ENCODE measurements at regions of chr5 and their contacts with region 1.

Region 1: DNA sequence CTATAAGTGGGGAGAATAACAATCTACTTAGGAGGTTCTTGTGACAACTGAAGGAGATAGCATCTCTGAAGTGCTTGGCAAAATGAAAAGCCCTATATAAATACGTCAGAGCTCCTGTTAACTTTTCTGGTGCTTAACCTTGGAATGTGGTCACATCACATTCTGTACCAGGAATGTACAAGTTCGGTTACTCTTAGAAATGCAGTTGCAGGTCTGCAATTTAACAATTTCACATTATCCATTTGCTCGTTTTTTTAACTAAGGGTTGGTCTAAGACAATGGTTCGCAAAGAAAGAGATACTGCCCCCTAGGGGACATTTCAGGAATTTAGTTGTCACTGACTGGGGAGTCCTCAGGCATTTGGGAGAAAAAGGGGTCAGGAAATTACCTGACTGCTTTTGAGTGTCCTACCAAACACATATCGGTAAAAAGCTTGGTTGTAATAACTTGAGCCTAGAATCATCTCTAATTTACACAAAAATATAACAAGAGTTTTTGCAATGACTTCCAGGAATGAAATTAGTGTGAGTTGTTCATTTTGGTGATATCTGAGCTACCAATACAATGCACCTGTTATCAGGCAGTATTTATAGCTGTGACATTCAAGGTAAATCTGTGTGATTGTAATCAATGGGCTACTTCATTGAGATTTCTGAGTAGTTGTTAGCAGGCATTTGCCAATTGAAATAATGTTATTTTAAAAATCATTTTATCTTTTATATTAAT is 5.4 kb upstream of the HBEGF start:
- DNase-seq: peak in 2 of 5 donors; percentile 61 to 62
- ATAC-seq: peak; percentile 32 to 55 (median 36)
- H3K4me3 ChIP-seq: no peak overlapping the region
- H3K27ac ChIP-seq: no peak overlapping the region
- H3K4me1 ChIP-seq: peaks cover 0 to 23% (median 15%) of the 10 kb centered on the region in 12 donors
- H3K27me3 ChIP-seq: no peaks in the 10 kb centered on the region
- CTCF ChIP-seq: peak; percentile 75 to 97 (median 89)
- POLR2A ChIP-seq: no peak

Region 2: DNA sequence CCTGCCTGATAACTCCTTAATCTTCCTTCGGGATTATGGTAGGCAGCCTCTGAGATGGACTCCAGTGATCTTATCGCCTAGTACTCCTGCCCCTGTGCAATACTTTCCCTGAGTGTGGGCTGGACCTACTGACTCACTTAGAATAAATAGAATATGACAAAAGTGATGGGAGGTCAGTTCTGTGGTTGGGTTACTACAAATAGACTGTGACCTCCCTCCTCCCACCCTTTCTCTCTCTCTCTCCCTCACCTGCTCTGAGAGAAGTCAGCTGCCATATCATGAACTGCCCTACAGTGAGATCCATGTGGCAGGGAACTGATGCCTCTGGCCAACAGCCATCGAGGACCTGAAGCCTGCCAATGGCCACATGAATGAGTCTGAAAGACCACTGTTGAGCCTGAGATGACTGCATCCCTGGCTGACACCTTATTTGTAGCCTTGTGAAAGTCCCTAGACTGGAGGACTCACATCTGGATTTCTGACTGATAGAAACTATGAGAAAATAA is 340.4 kb before region 1 on chr5:
- intact Hi-C with region 1: no loop called
- DNase-seq: peak in 4 of 5 donors; percentile 56 to 71 (median 67)
- ATAC-seq: peak; percentile 96 to 98 (median 96)
- H3K4me3 ChIP-seq: no peak overlapping the region
- H3K27ac ChIP-seq: peak overlapping the region; percentile 50 to 85 (median 75)
- H3K4me1 ChIP-seq: peaks cover 0 to 30% (median 12%) of the 10 kb centered on the region in 12 donors
- H3K27me3 ChIP-seq: peaks cover 0 to 6% (median 0%) of the 10 kb centered on the region in 9 donors
- CTCF ChIP-seq: no peak
- POLR2A ChIP-seq: no peak

Region 3: DNA sequence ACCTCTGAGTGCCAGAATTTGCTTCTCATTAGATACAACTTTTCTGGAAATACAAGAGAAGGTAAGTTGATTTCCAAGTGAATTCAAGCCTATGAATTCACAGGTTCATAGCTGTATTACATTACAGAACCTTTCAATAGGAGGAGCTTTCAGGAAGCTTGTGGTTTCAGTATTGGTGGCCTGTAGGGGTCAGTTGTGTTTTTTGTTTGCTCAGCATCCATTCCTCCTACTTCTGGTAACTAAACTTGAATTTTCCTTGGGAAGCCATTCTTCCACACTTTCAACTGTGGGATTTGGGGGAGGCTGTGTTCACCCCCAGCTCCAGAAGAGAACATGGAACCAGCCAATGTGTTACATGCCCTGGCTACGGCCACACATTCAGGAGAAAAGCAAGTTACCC is 182.4 kb before region 1 on chr5:
- intact Hi-C with region 1: loop called in 7 of 10 experiments (anchors 2 to 5 kb)
- DNase-seq: no peak
- ATAC-seq: no peak
- H3K4me3 ChIP-seq: no peak overlapping the region
- H3K27ac ChIP-seq: no peak overlapping the region
- H3K4me1 ChIP-seq: peaks cover 0 to 18% (median 8%) of the 10 kb centered on the region in 12 donors
- H3K27me3 ChIP-seq: no peaks in the 10 kb centered on the region
- CTCF ChIP-seq: peak in 7 of 12 donors; percentile 11 to 36 (median 22)
- POLR2A ChIP-seq: no peak

Region 4: GRCh38 chr5:140174465-140175366 is 177.1 kb before region 1 on chr5 and contains the start of gene CYSTM1:
- intact Hi-C with region 1: loop called in 8 of 10 experiments (anchors 2 to 5 kb)
- DNase-seq: peak; percentile 96 to 98 (median 98)
- ATAC-seq: peak; percentile 89 to 96 (median 94)
- H3K4me3 ChIP-seq: peak within 1 kb of the TSS; percentile 78 to 100 (median 92)
- H3K27ac ChIP-seq: peak within 1 kb of the TSS; percentile 86 to 100 (median 98)
- H3K4me1 ChIP-seq: peaks cover 0 to 42% (median 26%) of the 10 kb centered on the region in 12 donors
- H3K27me3 ChIP-seq: no peaks in the 10 kb centered on the region
- CTCF ChIP-seq: peak in 1 of 12 donors; percentile 15
- POLR2A ChIP-seq: peak in 1 of 2 donors; percentile 91
- total RNA-seq, gene CYSTM1: 58.1 to 222 (median 94.5) TPM

Region 5: DNA sequence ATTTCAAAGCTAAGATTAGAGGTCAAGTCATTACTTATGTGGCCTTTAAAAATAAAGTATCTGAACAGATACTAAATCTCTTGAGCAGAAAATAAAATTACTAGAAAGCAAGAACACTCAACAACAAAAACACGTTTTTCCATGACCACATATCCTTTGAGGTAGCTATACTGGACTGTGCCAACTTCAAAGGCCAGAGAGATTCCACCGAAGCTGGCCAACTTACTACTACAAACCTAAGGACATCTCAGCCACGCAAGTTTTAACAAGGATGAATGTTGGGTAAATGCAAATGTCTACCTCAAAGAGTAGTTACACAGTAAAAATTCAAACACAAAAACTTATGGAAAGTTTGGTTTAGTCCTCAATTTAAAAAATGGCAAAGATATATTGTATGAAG is 67.8 kb before region 1 on chr5:
- intact Hi-C with region 1: no loop called
- DNase-seq: no peak
- ATAC-seq: peak; percentile 52 to 76 (median 60)
- H3K4me3 ChIP-seq: no peak overlapping the region
- H3K27ac ChIP-seq: peak overlapping the region in 4 of 12 donors; percentile 2 to 72 (median 30)
- H3K4me1 ChIP-seq: peaks cover 0 to 36% (median 23%) of the 10 kb centered on the region in 12 donors
- H3K27me3 ChIP-seq: no peaks in the 10 kb centered on the region
- CTCF ChIP-seq: no peak
- POLR2A ChIP-seq: no peak

Measured in heart left ventricle (tissue), 16 donors.